Activated naive CD4-positive, alpha-beta T cell treated with anti-CD3 and anti-CD28 coated beads for 36 hours (primary cell): ENCODE measurements at regions of chr14 and their contacts with region 1.

Region 1: DNA sequence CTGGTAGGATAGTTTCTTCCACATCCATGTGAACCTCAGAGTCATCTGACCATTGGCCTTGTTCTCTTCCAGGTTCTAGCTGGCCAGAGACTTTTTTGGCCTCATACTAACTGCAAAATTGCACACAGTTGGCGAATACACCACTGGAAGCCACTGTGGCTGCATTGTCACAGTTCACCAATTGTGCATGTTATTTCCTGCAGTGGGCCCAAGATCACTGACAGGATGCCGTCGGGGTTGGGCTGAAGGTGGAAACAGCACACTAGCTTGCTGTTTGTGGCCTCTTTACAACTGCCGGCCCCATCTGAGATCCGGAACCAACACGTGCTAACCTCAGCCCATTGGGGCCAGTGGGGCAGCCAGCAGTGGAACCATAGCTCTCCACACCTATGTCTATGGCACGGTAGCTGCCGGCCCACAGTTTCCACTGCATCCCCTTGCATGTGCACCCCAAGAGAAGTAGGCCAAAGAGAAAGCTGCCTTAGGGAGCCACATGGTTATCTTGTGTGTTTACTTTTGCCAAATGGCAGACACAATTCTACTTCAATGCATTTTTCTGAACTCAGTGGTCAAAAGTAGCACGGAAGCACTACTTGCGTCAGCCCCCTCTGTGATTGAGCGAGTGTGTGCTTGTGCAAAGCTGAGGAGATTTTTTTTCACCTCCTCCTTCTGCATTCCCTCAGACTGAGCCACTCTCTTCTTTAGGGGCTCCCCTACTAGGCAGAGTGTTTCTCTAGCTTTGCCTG is 464.0 kb downstream of the RAD51B start:
- DNase-seq: peak; percentile 67
- H3K4me3 Mint-ChIP-seq: peak overlapping the region; percentile 27
- H3K27ac Mint-ChIP-seq: no peak overlapping the region
- H3K4me1 Mint-ChIP-seq: peaks cover 85% of the 10 kb centered on the region
- H3K27me3 Mint-ChIP-seq: no peaks in the 10 kb centered on the region

Region 2: DNA sequence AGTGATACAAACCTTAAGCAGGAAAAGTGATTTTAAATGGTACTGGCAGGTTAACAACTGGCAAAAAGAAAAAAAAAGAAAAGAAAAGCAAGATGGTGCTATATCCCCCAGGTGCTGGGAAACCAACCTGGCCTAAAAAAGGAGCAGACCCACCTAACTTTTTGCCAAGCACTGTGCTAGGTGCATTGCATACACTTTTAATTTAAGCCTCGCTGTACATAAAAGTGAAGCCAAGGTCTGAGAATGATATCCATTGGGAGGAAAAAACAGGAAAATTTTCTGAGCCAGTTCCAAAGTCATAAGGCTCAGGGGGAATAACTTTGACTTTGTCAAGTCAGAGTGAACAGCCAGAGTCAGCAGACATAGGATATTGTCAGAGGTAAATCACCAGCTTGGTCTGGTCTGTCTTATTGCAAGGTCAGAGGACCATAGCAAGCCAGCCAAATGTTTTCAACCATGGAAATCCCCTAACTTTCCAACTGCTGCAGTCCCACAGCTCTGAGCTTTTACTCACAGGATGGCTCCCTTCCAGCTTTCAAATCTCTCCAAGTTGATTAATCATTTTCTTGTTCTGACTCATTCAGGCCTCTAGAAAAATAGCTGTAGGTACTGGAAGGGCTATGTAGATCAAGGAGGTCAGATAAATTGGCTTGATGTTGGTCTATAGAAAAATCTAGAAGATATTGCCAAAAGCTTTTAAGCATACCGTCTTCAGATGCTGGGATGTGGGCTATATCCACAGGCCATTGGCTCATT is 51.1 kb before region 1 on chr14:
- CTCF ChIA-PET with region 1: no interaction called
- intact Hi-C with region 1: loop called (anchors 1 kb)
- DNase-seq: peak; percentile 73
- H3K4me3 Mint-ChIP-seq: no peak overlapping the region
- H3K27ac Mint-ChIP-seq: no peak overlapping the region
- H3K4me1 Mint-ChIP-seq: peaks cover 18% of the 10 kb centered on the region
- H3K27me3 Mint-ChIP-seq: no peaks in the 10 kb centered on the region

Region 3: GRCh38 chr14:68271913-68272425 is 11.6 kb before region 1 on chr14:
- CTCF ChIA-PET with region 1: interaction called, 6 read pairs
- intact Hi-C with region 1: loop called (anchors 1 kb)
- DNase-seq: no peak
- H3K4me3 Mint-ChIP-seq: no peak overlapping the region
- H3K27ac Mint-ChIP-seq: no peak overlapping the region
- H3K4me1 Mint-ChIP-seq: peaks cover 64% of the 10 kb centered on the region
- H3K27me3 Mint-ChIP-seq: no peaks in the 10 kb centered on the region

Region 4: GRCh38 chr14:68312884-68313610 is 29.5 kb after region 1 on chr14:
- CTCF ChIA-PET with region 1: no interaction called
- intact Hi-C with region 1: loop called (anchors 1 kb)
- DNase-seq: peak; percentile 72
- H3K4me3 Mint-ChIP-seq: no peak overlapping the region
- H3K27ac Mint-ChIP-seq: no peak overlapping the region
- H3K4me1 Mint-ChIP-seq: peaks cover 26% of the 10 kb centered on the region
- H3K27me3 Mint-ChIP-seq: no peaks in the 10 kb centered on the region

Region 5: GRCh38 chr14:68359837-68360552 is 76.4 kb after region 1 on chr14:
- CTCF ChIA-PET with region 1: no interaction called
- intact Hi-C with region 1: no loop called
- DNase-seq: peak; percentile 43
- H3K4me3 Mint-ChIP-seq: no peak overlapping the region
- H3K27ac Mint-ChIP-seq: peak overlapping the region; percentile 32
- H3K4me1 Mint-ChIP-seq: peaks cover 40% of the 10 kb centered on the region
- H3K27me3 Mint-ChIP-seq: no peaks in the 10 kb centered on the region

Region 6: DNA sequence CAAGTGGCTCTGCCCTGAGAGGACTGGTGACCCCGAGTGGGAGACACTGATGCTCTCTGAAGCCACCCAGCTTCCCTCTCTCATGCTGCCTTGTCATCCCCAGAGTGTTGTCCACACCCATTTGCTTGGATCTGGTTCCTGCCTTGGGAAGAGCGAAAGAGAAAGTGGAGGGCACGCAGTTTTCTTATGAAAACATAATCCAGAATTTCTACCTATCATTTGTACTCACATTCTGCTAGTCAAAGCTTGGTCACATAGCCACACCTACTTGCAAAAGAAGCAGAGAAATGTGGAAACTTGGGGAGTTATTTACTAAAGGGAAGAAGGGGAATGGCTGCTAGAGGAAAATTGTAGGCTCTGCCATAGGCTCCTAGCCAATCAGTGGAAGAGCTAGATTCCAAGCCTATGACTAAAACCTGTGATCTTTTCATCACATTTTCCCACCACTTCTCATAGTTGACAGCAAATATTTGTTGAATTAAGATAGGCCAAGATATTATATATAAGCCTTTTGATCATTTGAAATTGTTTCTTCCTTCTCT is 183.0 kb after region 1 on chr14:
- CTCF ChIA-PET with region 1: no interaction called
- intact Hi-C with region 1: loop called (anchors 5 kb)
- DNase-seq: no peak
- H3K4me3 Mint-ChIP-seq: no peak overlapping the region
- H3K27ac Mint-ChIP-seq: no peak overlapping the region
- H3K4me1 Mint-ChIP-seq: peaks cover 30% of the 10 kb centered on the region
- H3K27me3 Mint-ChIP-seq: no peaks in the 10 kb centered on the region

Region 7: GRCh38 chr14:68685419-68686204 is 402.1 kb after region 1 on chr14:
- CTCF ChIA-PET with region 1: no interaction called
- intact Hi-C with region 1: loop called (anchors 5 kb)
- DNase-seq: peak; percentile 90
- H3K4me3 Mint-ChIP-seq: peak overlapping the region; percentile 19
- H3K27ac Mint-ChIP-seq: peak overlapping the region; percentile 91
- H3K4me1 Mint-ChIP-seq: peaks cover 54% of the 10 kb centered on the region
- H3K27me3 Mint-ChIP-seq: no peaks in the 10 kb centered on the region

Region 8: GRCh38 chr14:68979021-68979782 is 695.7 kb after region 1 on chr14 and contains the start of gene ACTN1:
- CTCF ChIA-PET with region 1: no interaction called
- intact Hi-C with region 1: loop called (anchors 10 kb)
- DNase-seq: peak; percentile 89
- H3K4me3 Mint-ChIP-seq: peak within 1 kb of the TSS; percentile 85
- H3K27ac Mint-ChIP-seq: peak within 1 kb of the TSS; percentile 87
- H3K4me1 Mint-ChIP-seq: peaks cover 32% of the 10 kb centered on the region
- H3K27me3 Mint-ChIP-seq: no peaks in the 10 kb centered on the region
- total RNA-seq, gene ACTN1: 79.7 to 80.6 TPM